ENCODE measurements at regions of chr19 and their contacts with region 1.

Region 1: GRCh38 chr19:1383311-1384084 is at the start of gene NDUFS7:
- DNase-seq: peak; percentile 82 to 96 (median 92)

Region 2: DNA sequence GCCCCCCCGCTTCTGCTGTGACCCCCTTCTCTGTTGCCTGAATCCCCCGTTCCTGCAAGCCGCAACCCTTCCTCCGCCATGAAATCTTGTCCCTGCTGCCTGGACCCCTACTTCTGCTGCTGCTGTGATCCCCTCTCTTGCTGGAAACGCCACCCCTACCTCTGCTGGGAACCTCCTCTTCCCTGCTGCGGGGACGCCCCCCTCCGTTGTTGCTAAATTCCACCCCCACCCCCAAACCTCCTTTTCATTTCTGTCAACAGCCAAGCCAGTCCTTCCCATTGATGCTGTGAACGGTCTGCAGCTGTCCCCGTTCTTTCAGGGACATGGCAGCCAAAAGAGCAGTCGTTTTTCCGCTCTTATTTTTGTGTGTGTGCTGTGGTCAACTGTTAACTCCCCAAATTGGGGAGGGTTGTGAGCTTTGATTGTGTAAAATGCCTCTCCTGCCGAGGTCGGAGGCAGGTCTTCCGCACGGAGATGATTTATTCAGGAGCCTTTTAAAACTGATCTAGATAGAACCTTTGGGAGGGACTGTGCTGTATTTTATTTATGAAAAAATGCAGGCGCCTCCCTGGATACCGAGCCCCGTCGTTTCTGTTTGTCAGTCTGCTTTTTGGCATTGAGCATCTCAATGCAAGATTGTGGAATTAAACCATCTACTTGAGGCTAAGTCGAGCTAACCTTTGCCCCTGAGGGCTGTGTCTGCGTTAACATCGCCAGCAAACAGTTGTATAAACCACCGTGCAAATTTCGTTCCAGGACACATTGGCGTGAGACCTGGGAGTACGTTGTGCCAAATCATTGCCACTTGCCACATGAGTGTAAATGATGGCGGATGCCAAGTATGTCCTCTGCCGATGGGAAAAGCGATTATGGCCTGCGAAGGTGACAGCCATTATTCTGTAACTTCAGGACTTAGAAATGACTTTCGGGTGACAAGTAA is 27.7 kb before region 1 on chr19:
- intact Hi-C with region 1: loop called (anchors 2 kb)
- DNase-seq: peak in 41 of 42 donors; percentile 33 to 86 (median 64)

Measured in head of caudate nucleus (tissue), 42 donors.